CD4-positive, alpha-beta T cell (primary cell): ENCODE measurements at regions of chr21 and their contacts with region 1.

Region 1: GRCh38 chr21:19650074-19650473 is 1246.5 kb upstream of the TMPRSS15 start:
- DNase-seq: no peak
- ATAC-seq: no peak
- H3K4me3 ChIP-seq: no peak overlapping the region
- H3K4me3 Mint-ChIP-seq: no peak overlapping the region
- H3K27ac ChIP-seq: no peak overlapping the region
- H3K27ac Mint-ChIP-seq: no peak overlapping the region
- H3K4me1 ChIP-seq: no peaks in the 10 kb centered on the region
- H3K4me1 Mint-ChIP-seq: no peaks in the 10 kb centered on the region
- H3K27me3 ChIP-seq: no peaks in the 10 kb centered on the region
- H3K27me3 Mint-ChIP-seq: no peaks in the 10 kb centered on the region
- CTCF ChIP-seq: no peak

Region 2: DNA sequence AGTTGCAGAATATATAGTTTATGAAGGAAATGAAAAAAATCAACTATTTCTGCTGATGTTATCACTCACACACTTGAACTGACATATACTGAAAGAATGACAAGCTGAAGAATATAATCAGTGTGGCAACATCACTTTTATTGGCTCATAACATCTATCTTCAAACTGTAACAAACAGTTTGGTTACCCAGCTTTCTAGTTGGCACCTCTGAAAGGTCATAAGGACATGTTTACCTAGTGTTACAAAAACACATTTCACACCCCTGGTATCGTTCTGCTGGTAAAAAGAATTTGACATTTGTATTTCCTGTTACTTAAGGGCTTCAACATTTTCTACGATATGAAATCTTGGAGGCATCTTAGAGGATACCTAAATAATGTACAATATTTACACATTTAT is 81.2 kb after region 1 on chr21:
- CTCF ChIA-PET with region 1: no interaction called
- POLR2A ChIA-PET with region 1: no interaction called
- intact Hi-C with region 1: loop called in 1 of 2 experiments (anchors 10 kb)
- DNase-seq: no peak
- ATAC-seq: no peak
- H3K4me3 ChIP-seq: no peak overlapping the region
- H3K4me3 Mint-ChIP-seq: no peak overlapping the region
- H3K27ac ChIP-seq: no peak overlapping the region
- H3K27ac Mint-ChIP-seq: no peak overlapping the region
- H3K4me1 ChIP-seq: no peaks in the 10 kb centered on the region
- H3K4me1 Mint-ChIP-seq: no peaks in the 10 kb centered on the region
- H3K27me3 ChIP-seq: no peaks in the 10 kb centered on the region
- H3K27me3 Mint-ChIP-seq: no peaks in the 10 kb centered on the region
- CTCF ChIP-seq: no peak

Region 3: GRCh38 chr21:20086508-20086907 is 436.4 kb after region 1 on chr21:
- CTCF ChIA-PET with region 1: no interaction called
- POLR2A ChIA-PET with region 1: no interaction called
- intact Hi-C with region 1: no loop called
- DNase-seq: no peak
- ATAC-seq: no peak
- H3K4me3 ChIP-seq: no peak overlapping the region
- H3K4me3 Mint-ChIP-seq: no peak overlapping the region
- H3K27ac ChIP-seq: no peak overlapping the region
- H3K27ac Mint-ChIP-seq: no peak overlapping the region
- H3K4me1 ChIP-seq: no peaks in the 10 kb centered on the region
- H3K4me1 Mint-ChIP-seq: no peaks in the 10 kb centered on the region
- H3K27me3 ChIP-seq: no peaks in the 10 kb centered on the region
- H3K27me3 Mint-ChIP-seq: no peaks in the 10 kb centered on the region
- CTCF ChIP-seq: no peak